B cell (primary cell): ENCODE measurements at regions of chrX and their contacts with region 1.

Region 1: GRCh38 chrX:17725181-17725580 is 12.1 kb upstream of the SCML1 start:
- DNase-seq: no peak
- ATAC-seq: no peak
- H3K4me3 ChIP-seq: no peak overlapping the region
- H3K4me3 Mint-ChIP-seq: no peak overlapping the region
- H3K27ac ChIP-seq: no peak overlapping the region
- H3K27ac Mint-ChIP-seq: no peak overlapping the region
- H3K4me1 ChIP-seq: no peaks in the 10 kb centered on the region
- H3K4me1 Mint-ChIP-seq: no peaks in the 10 kb centered on the region
- H3K27me3 ChIP-seq: peaks cover 0 to 4% (median 0%) of the 10 kb centered on the region in 4 experiments
- H3K27me3 Mint-ChIP-seq: peaks cover 17% of the 10 kb centered on the region
- CTCF ChIP-seq: no peak

Region 2: DNA sequence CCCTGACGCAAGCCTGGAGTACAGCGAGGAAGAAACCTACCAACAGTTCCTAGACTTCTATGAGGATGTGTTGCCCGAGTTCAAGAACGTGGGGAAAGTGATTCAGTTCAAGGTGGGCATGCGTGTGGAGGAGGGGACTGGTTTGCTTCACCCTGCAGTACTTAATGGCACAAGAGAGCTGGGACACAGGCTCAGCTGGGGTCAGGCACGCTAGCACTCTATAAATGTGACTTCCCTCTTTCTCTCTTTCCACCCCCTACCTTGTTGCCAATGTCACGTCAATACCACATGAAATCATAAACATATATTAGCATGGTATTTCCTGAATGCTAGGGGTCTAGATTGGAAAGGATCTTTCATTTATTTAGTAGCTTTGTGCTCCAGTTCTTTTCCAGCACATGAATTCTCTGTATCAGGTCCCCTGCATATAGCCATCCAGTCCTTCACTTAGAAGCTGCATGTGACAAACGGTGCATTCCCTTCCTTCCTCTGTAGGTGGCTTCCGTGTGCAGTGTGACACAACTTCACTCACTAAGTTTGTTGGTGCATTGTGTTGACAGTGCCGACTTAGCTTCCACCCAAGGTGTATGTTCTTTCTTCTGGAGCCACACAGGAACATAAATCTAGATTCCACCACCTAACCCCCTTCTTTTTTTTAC is 1909.3 kb before region 1 on chrX:
- CTCF ChIA-PET with region 1: no interaction called
- POLR2A ChIA-PET with region 1: no interaction called
- intact Hi-C with region 1: no loop called
- DNase-seq: peak; percentile 28
- ATAC-seq: no peak
- H3K4me3 ChIP-seq: no peak overlapping the region
- H3K4me3 Mint-ChIP-seq: no peak overlapping the region
- H3K27ac ChIP-seq: no peak overlapping the region
- H3K27ac Mint-ChIP-seq: peak overlapping the region; percentile 32
- H3K4me1 ChIP-seq: no peaks in the 10 kb centered on the region
- H3K4me1 Mint-ChIP-seq: no peaks in the 10 kb centered on the region
- H3K27me3 ChIP-seq: no peaks in the 10 kb centered on the region
- H3K27me3 Mint-ChIP-seq: no peaks in the 10 kb centered on the region
- CTCF ChIP-seq: peak; percentile 17

Region 3: GRCh38 chrX:17744896-17745523 is 19.8 kb after region 1 on chrX:
- CTCF ChIA-PET with region 1: no interaction called
- POLR2A ChIA-PET with region 1: no interaction called
- intact Hi-C with region 1: loop called (anchors 1 kb)
- DNase-seq: no peak
- ATAC-seq: no peak
- H3K4me3 ChIP-seq: no peak overlapping the region
- H3K4me3 Mint-ChIP-seq: no peak overlapping the region
- H3K27ac ChIP-seq: no peak overlapping the region
- H3K27ac Mint-ChIP-seq: no peak overlapping the region
- H3K4me1 ChIP-seq: no peaks in the 10 kb centered on the region
- H3K4me1 Mint-ChIP-seq: peaks cover 2% of the 10 kb centered on the region
- H3K27me3 ChIP-seq: no peaks in the 10 kb centered on the region
- H3K27me3 Mint-ChIP-seq: no peaks in the 10 kb centered on the region
- CTCF ChIP-seq: no peak